Activated naive CD4-positive, alpha-beta T cell treated with anti-CD3 and anti-CD28 coated beads for 36 hours (primary cell): ENCODE measurements at regions of chr5 and their contacts with region 1.

Region 1: GRCh38 chr5:157858527-157859226 is at the start of gene CLINT1:
- DNase-seq: peak; percentile 90
- H3K4me3 Mint-ChIP-seq: peak within 1 kb of the TSS; percentile 86
- H3K27ac Mint-ChIP-seq: peak within 1 kb of the TSS; percentile 87
- H3K4me1 Mint-ChIP-seq: peaks cover 70% of the 10 kb centered on the region
- H3K27me3 Mint-ChIP-seq: no peaks in the 10 kb centered on the region
- total RNA-seq, gene CLINT1: 31.0 to 32.7 TPM

Region 2: GRCh38 chr5:156913719-156914370 is 944.8 kb before region 1 on chr5:
- CTCF ChIA-PET with region 1: no interaction called
- intact Hi-C with region 1: loop called (anchors 10 kb)
- DNase-seq: peak; percentile 64
- H3K4me3 Mint-ChIP-seq: peak overlapping the region; percentile 19
- H3K27ac Mint-ChIP-seq: peak overlapping the region; percentile 87
- H3K4me1 Mint-ChIP-seq: peaks cover 63% of the 10 kb centered on the region
- H3K27me3 Mint-ChIP-seq: no peaks in the 10 kb centered on the region

Region 3: GRCh38 chr5:157820593-157821252 is 38.0 kb before region 1 on chr5:
- CTCF ChIA-PET with region 1: interaction called, 5 read pairs
- intact Hi-C with region 1: loop called (anchors 2 kb)
- DNase-seq: peak; percentile 50
- H3K4me3 Mint-ChIP-seq: no peak overlapping the region
- H3K27ac Mint-ChIP-seq: no peak overlapping the region
- H3K4me1 Mint-ChIP-seq: peaks cover 30% of the 10 kb centered on the region
- H3K27me3 Mint-ChIP-seq: no peaks in the 10 kb centered on the region

Region 4: GRCh38 chr5:157890836-157891597 is 32.3 kb after region 1 on chr5:
- CTCF ChIA-PET with region 1: no interaction called
- intact Hi-C with region 1: loop called (anchors 2 kb)
- DNase-seq: no peak
- H3K4me3 Mint-ChIP-seq: no peak overlapping the region
- H3K27ac Mint-ChIP-seq: no peak overlapping the region
- H3K4me1 Mint-ChIP-seq: peaks cover 17% of the 10 kb centered on the region
- H3K27me3 Mint-ChIP-seq: no peaks in the 10 kb centered on the region

Region 5: DNA sequence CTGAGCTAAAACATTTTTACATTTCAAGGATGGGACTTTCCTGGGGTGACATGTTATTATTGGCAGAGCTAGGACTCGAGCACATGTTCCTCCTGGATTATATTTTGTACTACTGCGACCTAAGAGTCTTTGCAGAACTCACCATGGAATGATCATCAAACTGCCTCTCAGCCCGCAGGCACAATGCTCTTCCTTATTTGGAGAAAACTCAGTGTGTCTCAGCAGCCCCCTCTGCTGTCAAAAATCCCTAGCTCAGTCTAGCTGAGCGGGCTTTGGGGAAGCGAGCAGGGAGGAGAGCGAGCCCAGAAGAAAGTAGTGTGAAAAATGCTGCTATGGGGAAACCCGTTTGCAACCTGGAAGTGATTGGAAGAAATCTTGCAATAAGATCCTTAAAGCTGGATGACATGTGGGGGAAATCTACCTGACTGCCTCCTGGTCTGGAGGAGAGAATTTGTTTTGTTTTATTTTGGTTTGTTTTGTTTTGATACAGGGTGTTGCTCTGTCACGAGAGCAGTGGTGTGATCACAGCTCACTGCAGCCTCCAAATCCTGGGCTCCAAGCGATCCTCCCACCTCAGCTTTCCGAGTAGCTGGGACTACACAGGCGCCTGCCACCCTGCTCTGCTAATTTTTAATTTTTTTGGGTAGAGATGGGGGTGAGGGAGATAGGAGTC is 90.2 kb after region 1 on chr5:
- CTCF ChIA-PET with region 1: interaction called, 18 read pairs
- intact Hi-C with region 1: loop called (anchors 1 kb)
- DNase-seq: peak; percentile 91
- H3K4me3 Mint-ChIP-seq: no peak overlapping the region
- H3K27ac Mint-ChIP-seq: no peak overlapping the region
- H3K4me1 Mint-ChIP-seq: peaks cover 4% of the 10 kb centered on the region
- H3K27me3 Mint-ChIP-seq: peaks cover 4% of the 10 kb centered on the region

Region 6: GRCh38 chr5:159120446-159120845 is 1261.8 kb after region 1 on chr5:
- CTCF ChIA-PET with region 1: no interaction called
- intact Hi-C with region 1: loop called (anchors 5 kb)
- DNase-seq: no peak
- H3K4me3 Mint-ChIP-seq: peak overlapping the region; percentile 51
- H3K27ac Mint-ChIP-seq: peak overlapping the region; percentile 70
- H3K4me1 Mint-ChIP-seq: peaks cover 26% of the 10 kb centered on the region
- H3K27me3 Mint-ChIP-seq: no peaks in the 10 kb centered on the region